Naive thymus-derived CD4-positive, alpha-beta T cell (primary cell): ENCODE measurements at regions of chr4 and their contacts with region 1.

Region 1: DNA sequence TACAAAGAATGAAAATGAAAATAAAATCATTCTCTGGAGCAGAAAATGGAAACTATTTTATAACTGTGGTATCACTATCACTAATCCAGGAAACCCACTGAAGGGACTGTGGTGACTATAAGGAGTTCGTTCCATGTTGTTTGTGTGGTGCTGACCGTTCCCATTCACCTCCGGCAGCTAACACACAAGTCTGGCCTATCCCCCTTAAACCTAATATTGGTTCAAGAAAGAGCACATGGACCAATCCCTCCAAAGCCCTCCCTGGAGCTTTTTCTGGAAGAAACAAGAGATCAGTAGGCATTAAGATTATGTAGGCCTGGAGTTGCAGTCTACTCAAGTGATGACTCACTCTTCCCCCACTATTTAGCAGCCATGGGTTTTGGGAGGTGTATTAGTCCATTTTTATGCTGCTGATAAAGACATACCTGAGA is 25.9 kb upstream of the FAM241A start:
- DNase-seq: peak in 1 of 9 donors; percentile 41
- ATAC-seq: no peak
- H3K4me3 ChIP-seq: no peak overlapping the region
- H3K4me3 Mint-ChIP-seq: peak overlapping the region in 1 of 10 donors; percentile 65
- H3K27ac ChIP-seq: no peak overlapping the region
- H3K27ac Mint-ChIP-seq: peak overlapping the region in 1 of 9 donors; percentile 94
- H3K4me1 ChIP-seq: no peaks in the 10 kb centered on the region
- H3K4me1 Mint-ChIP-seq: peaks cover 2 to 17% (median 11%) of the 10 kb centered on the region in 7 donors
- H3K27me3 ChIP-seq: no peaks in the 10 kb centered on the region
- H3K27me3 Mint-ChIP-seq: peaks cover 0 to 14% (median 6%) of the 10 kb centered on the region in 5 donors

Region 2: GRCh38 chr4:112199040-112199439 is 79.7 kb after region 1 on chr4:
- CTCF ChIA-PET with region 1: no interaction called
- POLR2A ChIA-PET with region 1: no interaction called
- intact Hi-C with region 1: loop called in 1 of 2 experiments (anchors 5 kb)
- DNase-seq: no peak
- ATAC-seq: no peak
- H3K4me3 ChIP-seq: no peak overlapping the region
- H3K4me3 Mint-ChIP-seq: no peak overlapping the region
- H3K27ac ChIP-seq: no peak overlapping the region
- H3K27ac Mint-ChIP-seq: no peak overlapping the region
- H3K4me1 ChIP-seq: no peaks in the 10 kb centered on the region
- H3K4me1 Mint-ChIP-seq: peaks cover 0 to 15% (median 0%) of the 10 kb centered on the region in 7 donors
- H3K27me3 ChIP-seq: no peaks in the 10 kb centered on the region
- H3K27me3 Mint-ChIP-seq: no peaks in the 10 kb centered on the region